Activated CD4-positive, alpha-beta memory T cell treated with anti-CD3 and anti-CD28 coated beads for 36 hours (primary cell): ENCODE measurements at regions of chr1 and their contacts with region 1.

Region 1: DNA sequence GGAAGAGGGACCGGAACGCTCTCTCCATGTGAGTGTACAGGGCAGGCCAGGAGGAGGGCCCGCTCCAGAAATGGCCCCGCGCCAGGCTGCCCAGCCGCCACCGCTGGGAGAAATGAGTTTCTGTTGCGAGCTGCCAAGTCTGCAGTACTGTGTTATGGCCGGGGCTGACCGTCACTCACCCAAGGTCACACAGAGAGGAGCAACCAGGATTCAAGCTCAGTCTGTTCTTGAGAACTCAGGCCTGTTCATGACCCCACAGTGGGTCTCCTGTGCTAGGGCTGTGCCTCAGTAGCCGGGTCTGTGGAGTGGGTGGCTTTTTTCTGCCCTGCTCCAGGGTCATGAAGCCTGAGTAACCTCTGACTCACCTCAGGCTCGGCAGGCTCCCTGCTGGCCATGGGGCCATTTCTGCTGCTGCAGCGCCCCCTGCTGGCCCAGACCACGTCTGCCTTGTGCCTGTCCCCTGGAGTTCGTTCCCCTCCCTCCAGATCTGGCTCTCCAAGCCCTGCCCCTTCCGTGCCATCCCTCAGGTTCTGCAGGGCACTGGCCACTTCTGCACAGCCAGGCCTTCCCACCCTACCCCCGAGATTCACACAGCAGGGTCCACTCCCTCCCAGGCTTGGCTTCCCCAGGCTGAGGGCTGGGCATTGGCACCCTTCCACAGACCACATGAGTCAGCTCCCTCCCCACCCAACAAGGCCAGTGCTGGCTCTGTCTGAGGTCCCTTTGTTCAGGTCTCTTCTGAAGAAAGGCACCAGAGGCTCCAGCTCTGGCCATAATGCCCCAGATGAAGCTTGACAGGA is 51.8 kb downstream of the EDN2 start:
- DNase-seq: peak; percentile 87
- H3K4me3 Mint-ChIP-seq: no peak overlapping the region
- H3K27ac Mint-ChIP-seq: no peak overlapping the region
- H3K4me1 Mint-ChIP-seq: no peaks in the 10 kb centered on the region
- H3K27me3 Mint-ChIP-seq: peaks cover 26% of the 10 kb centered on the region

Region 2: DNA sequence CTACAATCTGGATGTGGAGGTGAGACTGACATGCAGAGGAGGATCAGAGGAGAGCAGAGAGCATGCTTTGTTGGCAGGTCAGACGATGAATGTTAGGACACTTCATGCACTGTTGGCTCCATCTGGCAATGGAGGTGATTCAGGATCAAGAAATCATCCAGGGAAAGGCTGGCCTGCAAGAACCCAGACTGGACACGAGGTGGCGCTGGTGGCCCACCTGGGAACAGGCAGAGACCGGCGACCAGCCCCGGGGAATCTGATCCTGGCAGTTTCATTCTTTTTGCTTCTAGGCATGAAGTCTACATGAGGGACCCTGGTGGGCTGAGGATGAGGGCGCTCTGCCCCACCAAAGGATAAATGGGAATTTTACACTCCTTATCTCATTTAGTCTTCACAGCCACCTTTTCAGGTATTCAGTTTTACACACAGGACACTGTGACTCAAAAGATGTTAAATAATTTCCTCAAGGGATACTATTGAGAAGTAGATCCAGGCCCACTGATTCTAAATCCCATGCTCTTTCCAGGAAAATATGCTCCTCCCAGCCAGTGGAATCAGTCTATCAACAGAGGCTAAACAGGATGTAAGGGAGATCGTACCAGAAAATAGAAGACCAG is 164.4 kb before region 1 on chr1:
- CTCF ChIA-PET with region 1: interaction called, 16 read pairs
- POLR2A ChIA-PET with region 1: no interaction called
- intact Hi-C with region 1: loop called (anchors 5 kb)
- DNase-seq: peak; percentile 71
- H3K4me3 Mint-ChIP-seq: no peak overlapping the region
- H3K27ac Mint-ChIP-seq: no peak overlapping the region
- H3K4me1 Mint-ChIP-seq: no peaks in the 10 kb centered on the region
- H3K27me3 Mint-ChIP-seq: no peaks in the 10 kb centered on the region

Region 3: DNA sequence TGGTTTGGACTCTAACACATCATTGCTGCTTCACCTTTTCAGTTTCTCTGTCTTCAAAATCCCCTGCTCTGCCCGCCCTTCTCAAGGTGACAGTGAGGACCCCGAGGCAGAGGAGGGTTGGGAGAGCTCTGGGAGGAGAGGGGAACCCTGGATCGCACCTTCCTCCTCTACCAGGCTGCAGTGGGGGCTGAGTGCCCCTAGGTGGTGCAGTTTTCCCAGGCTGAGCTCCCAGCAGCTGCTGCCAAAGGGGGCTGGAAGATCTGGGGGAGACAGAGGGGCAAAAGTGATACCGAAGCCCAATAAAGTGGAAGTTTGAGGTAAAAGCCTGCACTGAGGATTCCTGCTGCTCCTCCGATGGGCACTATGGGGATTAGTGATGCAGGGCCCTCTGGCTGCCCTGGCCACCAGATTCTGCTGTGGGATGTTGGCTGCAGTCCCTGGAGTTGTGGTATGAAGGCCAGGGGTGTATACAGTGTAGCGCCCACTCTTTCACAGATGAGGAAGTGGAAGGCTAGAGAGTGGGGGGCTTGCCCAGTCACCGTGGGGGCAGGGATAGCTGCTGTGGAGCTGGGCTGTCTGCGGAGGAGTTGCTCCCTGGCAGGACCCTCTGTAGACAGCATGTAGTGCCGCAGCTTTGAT is 149.9 kb before region 1 on chr1:
- CTCF ChIA-PET with region 1: interaction called, 31 read pairs
- POLR2A ChIA-PET with region 1: no interaction called
- intact Hi-C with region 1: no loop called
- DNase-seq: peak; percentile 38
- H3K4me3 Mint-ChIP-seq: no peak overlapping the region
- H3K27ac Mint-ChIP-seq: no peak overlapping the region
- H3K4me1 Mint-ChIP-seq: no peaks in the 10 kb centered on the region
- H3K27me3 Mint-ChIP-seq: peaks cover 32% of the 10 kb centered on the region

Region 4: GRCh38 chr1:41322835-41323627 is 109.7 kb before region 1 on chr1:
- CTCF ChIA-PET with region 1: interaction called, 30 read pairs
- POLR2A ChIA-PET with region 1: no interaction called
- intact Hi-C with region 1: no loop called
- DNase-seq: peak; percentile 47
- H3K4me3 Mint-ChIP-seq: no peak overlapping the region
- H3K27ac Mint-ChIP-seq: no peak overlapping the region
- H3K4me1 Mint-ChIP-seq: no peaks in the 10 kb centered on the region
- H3K27me3 Mint-ChIP-seq: peaks cover 2% of the 10 kb centered on the region